B cell (primary cell): ENCODE measurements at regions of chr9 and their contacts with region 1.

Region 1: DNA sequence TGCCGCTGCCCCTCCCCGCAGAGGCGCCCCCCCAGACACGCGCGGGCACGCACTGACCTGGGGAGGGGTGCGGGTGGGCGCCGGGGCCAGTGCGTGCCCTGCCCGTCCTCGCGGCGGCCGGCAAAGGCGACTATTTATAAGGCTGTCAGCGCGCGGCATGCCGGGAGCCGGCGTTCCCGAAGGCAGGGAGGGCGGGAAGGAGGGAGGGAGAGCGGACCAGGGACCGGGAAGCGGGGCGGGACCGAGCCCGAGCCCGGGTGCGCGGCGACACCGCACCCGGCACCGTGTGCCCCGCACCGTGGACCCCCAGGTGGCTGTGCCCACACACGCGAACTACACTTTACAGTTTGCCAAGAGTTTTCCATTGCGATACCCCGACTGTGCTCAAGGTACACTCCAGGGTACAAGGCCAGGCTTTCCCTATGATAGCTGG is at the start of gene AK1:
- DNase-seq: no peak
- ATAC-seq: peak; percentile 18
- H3K4me3 ChIP-seq: peak within 1 kb of the TSS in 3 of 5 experiments; percentile 25 to 34 (median 30)
- H3K4me3 Mint-ChIP-seq: peak within 1 kb of the TSS; percentile 75
- H3K27ac ChIP-seq: no peak within 1 kb of the TSS
- H3K27ac Mint-ChIP-seq: peak within 1 kb of the TSS; percentile 32
- H3K4me1 ChIP-seq: peaks cover 21 to 34% of the 10 kb centered on the region in 2 donors
- H3K4me1 Mint-ChIP-seq: peaks cover 26% of the 10 kb centered on the region
- H3K27me3 ChIP-seq: peaks cover 0 to 12% (median 3%) of the 10 kb centered on the region in 4 experiments
- H3K27me3 Mint-ChIP-seq: no peaks in the 10 kb centered on the region
- CTCF ChIP-seq: no peak
- total RNA-seq, gene AK1: 31.8 and 35.0 TPM in 2 replicates

Region 2: DNA sequence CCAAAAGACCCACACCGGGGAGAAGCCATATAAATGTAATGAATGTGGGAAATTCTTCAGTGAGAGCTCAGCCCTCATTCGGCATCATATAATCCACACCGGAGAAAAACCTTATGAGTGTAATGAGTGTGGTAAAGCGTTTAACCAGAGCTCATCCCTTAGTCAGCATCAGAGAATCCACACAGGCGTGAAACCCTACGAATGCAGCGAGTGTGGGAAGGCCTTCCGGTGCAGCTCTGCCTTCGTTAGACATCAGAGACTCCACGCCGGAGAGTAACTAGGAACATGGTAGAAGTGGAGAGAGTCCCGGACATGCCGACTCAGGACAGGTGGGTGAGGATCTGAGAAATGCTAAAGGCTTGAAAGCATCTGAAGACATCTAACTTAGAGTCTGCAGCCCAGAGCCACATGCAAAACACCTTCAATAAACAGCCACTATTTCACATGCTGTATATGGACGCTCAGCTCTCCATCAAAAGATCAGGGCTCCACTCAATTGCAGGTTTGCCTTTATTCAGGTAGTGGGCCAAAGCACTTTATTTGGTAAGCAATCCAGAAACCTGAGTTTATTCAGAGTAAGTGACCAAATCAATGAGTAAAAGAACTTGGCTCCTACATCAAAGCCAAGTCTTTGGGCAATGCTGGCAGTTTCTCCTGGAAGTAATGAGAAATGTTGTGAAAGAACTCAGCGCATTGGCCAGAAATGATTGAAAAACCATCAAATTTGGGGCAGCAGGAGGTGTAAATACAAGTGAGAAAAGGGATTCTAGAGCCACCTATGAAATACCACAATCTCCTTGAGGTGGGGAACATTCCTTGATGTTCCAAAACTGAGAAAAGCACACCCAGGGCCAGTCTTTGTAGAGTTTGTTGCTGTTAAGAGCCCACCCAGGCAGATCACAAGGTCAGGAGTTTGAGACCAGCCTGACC is 432.4 kb before region 1 on chr9:
- CTCF ChIA-PET with region 1: no interaction called
- POLR2A ChIA-PET with region 1: no interaction called
- intact Hi-C with region 1: no loop called
- DNase-seq: no peak
- ATAC-seq: no peak
- H3K4me3 ChIP-seq: no peak overlapping the region
- H3K4me3 Mint-ChIP-seq: no peak overlapping the region
- H3K27ac ChIP-seq: peak overlapping the region in 1 of 2 donors; percentile 23
- H3K27ac Mint-ChIP-seq: no peak overlapping the region
- H3K4me1 ChIP-seq: peaks cover 11 to 14% of the 10 kb centered on the region in 2 donors
- H3K4me1 Mint-ChIP-seq: peaks cover 26% of the 10 kb centered on the region
- H3K27me3 ChIP-seq: no peaks in the 10 kb centered on the region
- H3K27me3 Mint-ChIP-seq: no peaks in the 10 kb centered on the region
- CTCF ChIP-seq: no peak

Region 3: DNA sequence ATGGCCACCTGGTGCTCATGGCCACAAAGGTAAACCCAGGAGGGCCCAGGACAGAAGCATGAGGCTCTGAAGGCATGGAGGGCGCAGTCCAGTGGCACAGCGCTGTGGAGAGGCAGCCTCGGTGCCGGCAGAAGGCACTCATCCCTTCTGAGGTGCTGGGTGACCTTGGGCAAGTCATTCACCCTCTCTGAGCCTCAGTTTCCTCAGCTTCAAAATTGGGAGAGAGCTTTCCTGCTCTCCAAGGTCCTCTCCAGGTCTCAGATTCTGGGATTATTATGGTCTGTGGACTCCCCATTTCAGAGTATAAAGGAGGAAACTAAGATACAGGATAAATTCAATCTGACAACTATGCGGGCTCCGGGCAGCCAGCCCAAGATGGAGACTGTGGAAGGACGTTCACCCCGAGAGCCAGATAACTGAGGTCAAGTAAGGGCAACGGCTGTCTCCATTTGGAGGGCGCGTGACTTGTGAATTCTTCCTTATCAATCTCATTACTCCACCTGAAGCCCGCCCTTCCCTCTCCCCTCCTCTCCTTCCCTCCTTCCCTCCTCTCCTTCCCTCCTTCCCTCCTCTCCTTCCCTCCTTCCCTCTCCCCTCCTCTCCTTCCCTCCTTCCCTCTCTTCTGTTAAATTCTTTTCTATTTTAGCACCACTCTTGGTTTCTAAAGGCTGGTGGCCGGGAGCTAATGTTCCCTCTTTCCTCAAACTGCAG is 368.2 kb before region 1 on chr9:
- CTCF ChIA-PET with region 1: no interaction called
- POLR2A ChIA-PET with region 1: interaction called, 11 read pairs
- intact Hi-C with region 1: no loop called
- DNase-seq: no peak
- ATAC-seq: no peak
- H3K4me3 ChIP-seq: no peak overlapping the region
- H3K4me3 Mint-ChIP-seq: no peak overlapping the region
- H3K27ac ChIP-seq: no peak overlapping the region
- H3K27ac Mint-ChIP-seq: no peak overlapping the region
- H3K4me1 ChIP-seq: no peaks in the 10 kb centered on the region
- H3K4me1 Mint-ChIP-seq: no peaks in the 10 kb centered on the region
- H3K27me3 ChIP-seq: no peaks in the 10 kb centered on the region
- H3K27me3 Mint-ChIP-seq: no peaks in the 10 kb centered on the region
- CTCF ChIP-seq: no peak